Esophagus squamous epithelium (tissue), 5 donors: ENCODE measurements at regions of chr17 and their contacts with region 1.

Region 1: GRCh38 chr17:21295036-21295952 is 10.8 kb downstream of the MAP2K3 start:
- DNase-seq: no peak
- H3K4me3 ChIP-seq: no peak overlapping the region
- H3K27ac ChIP-seq: no peak overlapping the region
- H3K4me1 ChIP-seq: peaks cover 0 to 49% (median 11%) of the 10 kb centered on the region in 3 donors
- H3K27me3 ChIP-seq: peaks cover 0 to 3% (median 0%) of the 10 kb centered on the region in 4 donors
- CTCF ChIP-seq: no peak
- POLR2A ChIP-seq: no peak

Region 2: DNA sequence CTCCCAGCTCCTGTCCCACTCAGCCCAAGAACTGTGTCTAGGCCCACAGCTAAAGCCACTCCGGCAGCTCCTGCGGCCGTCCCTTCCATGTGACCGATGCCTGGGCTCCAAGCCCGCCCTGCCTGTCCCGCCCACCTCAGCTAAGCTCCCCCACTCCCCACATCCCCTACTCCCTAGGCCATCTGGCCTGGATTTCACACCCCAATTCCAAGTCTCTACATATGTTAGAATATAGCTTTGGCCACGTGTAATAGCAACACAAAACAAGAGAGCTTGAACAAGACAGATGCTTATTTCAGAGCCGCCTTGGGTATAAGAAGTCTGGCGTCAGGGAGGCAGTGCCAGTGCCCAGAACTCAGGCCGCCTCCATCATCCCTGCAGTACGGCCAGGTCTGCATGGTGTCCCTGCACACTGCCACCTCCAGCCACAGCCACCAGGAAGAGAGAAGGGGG is 222.5 kb before region 1 on chr17:
- intact Hi-C with region 1: no loop called
- DNase-seq: no peak
- H3K4me3 ChIP-seq: no peak overlapping the region
- H3K27ac ChIP-seq: no peak overlapping the region
- H3K4me1 ChIP-seq: peaks cover 0 to 12% (median 0%) of the 10 kb centered on the region in 3 donors
- H3K27me3 ChIP-seq: no peaks in the 10 kb centered on the region
- CTCF ChIP-seq: no peak
- POLR2A ChIP-seq: no peak

Region 3: GRCh38 chr17:21126645-21127510 is 168.4 kb before region 1 on chr17 and contains the start of gene DHRS7B:
- intact Hi-C with region 1: no loop called
- DNase-seq: peak; percentile 56
- H3K4me3 ChIP-seq: peak within 1 kb of the TSS; percentile 62 to 98 (median 73)
- H3K27ac ChIP-seq: peak within 1 kb of the TSS; percentile 90 to 98 (median 96)
- H3K4me1 ChIP-seq: peaks cover 8 to 49% (median 13%) of the 10 kb centered on the region in 3 donors
- H3K27me3 ChIP-seq: peaks cover 0 to 3% (median 0%) of the 10 kb centered on the region in 4 donors
- CTCF ChIP-seq: peak in 1 of 6 experiments; percentile 6
- POLR2A ChIP-seq: peak in 2 of 4 donors; percentile 69 to 75
- total RNA-seq, gene DHRS7B: 18.8 to 32.4 (median 22.3) TPM

Region 4: DNA sequence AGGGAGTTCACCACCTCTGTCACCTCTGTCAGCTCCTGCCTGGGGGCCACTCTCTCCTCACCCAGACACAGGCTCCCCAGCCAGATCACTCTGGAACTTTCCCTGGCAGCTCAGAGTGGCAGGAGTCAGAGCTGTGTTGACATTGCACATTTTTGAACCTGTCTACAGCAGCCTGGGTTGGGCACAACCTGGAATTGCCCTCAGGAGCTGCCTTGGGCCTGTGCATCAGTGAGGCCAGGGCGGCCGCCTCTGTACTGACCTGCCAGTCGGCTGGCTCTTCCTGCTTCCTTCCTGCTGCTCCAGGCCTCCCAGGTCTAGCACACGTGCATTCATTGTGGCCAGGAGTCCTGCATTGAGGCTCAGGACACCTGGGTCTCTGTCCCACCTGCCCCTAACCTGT is 67.2 kb before region 1 on chr17:
- intact Hi-C with region 1: no loop called
- DNase-seq: no peak
- H3K4me3 ChIP-seq: no peak overlapping the region
- H3K27ac ChIP-seq: no peak overlapping the region
- H3K4me1 ChIP-seq: no peaks in the 10 kb centered on the region
- H3K27me3 ChIP-seq: no peaks in the 10 kb centered on the region
- CTCF ChIP-seq: no peak
- POLR2A ChIP-seq: no peak

Region 5: DNA sequence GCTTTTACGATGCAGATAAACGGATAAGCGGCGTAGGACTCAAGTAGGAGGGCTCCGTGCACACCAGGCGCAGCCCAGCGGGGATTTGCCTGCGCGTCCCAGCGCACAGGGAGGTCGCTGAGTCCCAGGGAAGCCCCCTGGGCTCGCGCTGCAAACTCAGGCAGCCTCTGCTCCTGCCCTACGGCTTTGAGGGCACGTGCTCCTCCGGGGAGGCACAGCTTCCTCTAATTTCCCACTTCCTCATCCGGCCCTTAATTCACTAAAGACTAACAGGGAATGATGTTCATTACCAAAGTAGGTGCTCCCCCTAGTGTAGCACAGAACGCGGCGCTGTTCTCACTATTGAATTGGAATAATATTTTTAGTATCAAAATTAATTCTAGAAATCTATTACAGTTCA is 1222.4 kb after region 1 on chr17:
- intact Hi-C with region 1: loop called (anchors 10 kb)
- DNase-seq: no peak
- H3K4me3 ChIP-seq: no peak overlapping the region
- H3K27ac ChIP-seq: no peak overlapping the region
- H3K4me1 ChIP-seq: no peaks in the 10 kb centered on the region
- H3K27me3 ChIP-seq: no peaks in the 10 kb centered on the region
- CTCF ChIP-seq: no peak
- POLR2A ChIP-seq: no peak